Activated CD4-positive, alpha-beta T cell treated with anti-CD3 and anti-CD28 coated beads for 36 hours (primary cell): ENCODE measurements at regions of chr1 and their contacts with region 1.

Region 1: GRCh38 chr1:170164103-170164763 is 18.5 kb downstream of the NTMT2 start:
- DNase-seq: no peak
- ATAC-seq: peak; percentile 39
- H3K4me3 Mint-ChIP-seq: no peak overlapping the region
- H3K27ac Mint-ChIP-seq: no peak overlapping the region
- H3K4me1 Mint-ChIP-seq: peaks cover 5% of the 10 kb centered on the region
- H3K27me3 Mint-ChIP-seq: peaks cover 3% of the 10 kb centered on the region

Region 2: GRCh38 chr1:169941982-169942830 is 222.0 kb before region 1 on chr1:
- CTCF ChIA-PET with region 1: no interaction called
- POLR2A ChIA-PET with region 1: no interaction called
- intact Hi-C with region 1: no loop called
- DNase-seq: no peak
- ATAC-seq: no peak
- H3K4me3 Mint-ChIP-seq: no peak overlapping the region
- H3K27ac Mint-ChIP-seq: no peak overlapping the region
- H3K4me1 Mint-ChIP-seq: no peaks in the 10 kb centered on the region
- H3K27me3 Mint-ChIP-seq: no peaks in the 10 kb centered on the region

Region 3: GRCh38 chr1:170340343-170340707 is 176.1 kb after region 1 on chr1:
- CTCF ChIA-PET with region 1: no interaction called
- POLR2A ChIA-PET with region 1: interaction called, 10 read pairs
- intact Hi-C with region 1: no loop called
- DNase-seq: no peak
- ATAC-seq: no peak
- H3K4me3 Mint-ChIP-seq: no peak overlapping the region
- H3K27ac Mint-ChIP-seq: no peak overlapping the region
- H3K4me1 Mint-ChIP-seq: no peaks in the 10 kb centered on the region
- H3K27me3 Mint-ChIP-seq: peaks cover 2% of the 10 kb centered on the region